ENCODE measurements at regions of chr2 and their contacts with region 1.

Region 1: DNA sequence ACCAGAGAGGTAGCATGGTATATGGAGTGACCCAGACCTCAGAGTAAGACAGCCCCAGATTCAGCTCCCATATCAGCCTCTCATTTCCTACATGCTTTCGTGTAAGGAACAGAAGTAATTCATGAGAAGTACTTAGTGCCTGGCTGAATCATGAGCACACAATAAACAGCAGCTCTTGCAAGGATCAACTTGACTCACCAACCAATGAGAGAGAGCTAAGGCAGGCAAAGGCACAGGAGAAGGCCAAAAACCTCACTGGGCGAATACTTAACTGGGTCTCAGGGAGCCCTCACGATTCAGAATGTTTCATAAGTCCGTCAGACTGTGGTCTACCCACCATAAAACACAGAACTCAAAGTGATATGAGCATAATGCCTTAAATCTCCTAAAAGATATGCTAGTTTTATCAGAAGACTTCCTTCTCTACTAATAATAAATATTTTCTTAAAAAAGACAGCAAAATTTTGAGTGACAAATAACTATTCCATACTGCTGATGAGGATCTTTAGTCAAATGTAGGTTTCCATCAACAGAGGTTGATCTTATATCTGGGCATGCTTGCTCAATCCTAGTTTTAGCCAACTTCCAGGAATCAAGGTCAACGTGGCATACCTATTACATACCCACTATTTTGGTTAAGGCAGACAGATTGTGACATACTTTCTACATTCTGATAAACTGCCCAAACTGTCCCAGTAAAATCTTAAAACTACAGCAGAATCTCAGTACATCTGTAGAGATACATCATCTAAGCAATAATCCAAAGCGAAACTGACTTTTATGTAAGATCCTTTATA is 34.9 kb downstream of the IMMT start:
- DNase-seq: no peak
- ATAC-seq: no peak
- H3K4me3 ChIP-seq: no peak overlapping the region
- H3K4me3 Mint-ChIP-seq: no peak overlapping the region
- H3K27ac ChIP-seq: no peak overlapping the region
- H3K27ac Mint-ChIP-seq: no peak overlapping the region
- H3K4me1 ChIP-seq: no peaks in the 10 kb centered on the region
- H3K4me1 Mint-ChIP-seq: no peaks in the 10 kb centered on the region
- H3K27me3 ChIP-seq: no peaks in the 10 kb centered on the region
- H3K27me3 Mint-ChIP-seq: no peaks in the 10 kb centered on the region
- CTCF ChIP-seq: no peak

Region 2: GRCh38 chr2:86118133-86118532 is 42.2 kb before region 1 on chr2:
- CTCF ChIA-PET with region 1: no interaction called
- POLR2A ChIA-PET with region 1: interaction called, 3 read pairs
- intact Hi-C with region 1: loop called in 1 of 2 experiments (anchors 1 kb)
- DNase-seq: no peak
- ATAC-seq: no peak
- H3K4me3 ChIP-seq: no peak overlapping the region
- H3K4me3 Mint-ChIP-seq: no peak overlapping the region
- H3K27ac ChIP-seq: no peak overlapping the region
- H3K27ac Mint-ChIP-seq: no peak overlapping the region
- H3K4me1 ChIP-seq: no peaks in the 10 kb centered on the region
- H3K4me1 Mint-ChIP-seq: peaks cover 8% of the 10 kb centered on the region
- H3K27me3 ChIP-seq: no peaks in the 10 kb centered on the region
- H3K27me3 Mint-ChIP-seq: no peaks in the 10 kb centered on the region
- CTCF ChIP-seq: no peak

Region 3: GRCh38 chr2:86124683-86125082 is 35.7 kb before region 1 on chr2:
- CTCF ChIA-PET with region 1: no interaction called
- POLR2A ChIA-PET with region 1: no interaction called
- intact Hi-C with region 1: loop called in 1 of 2 experiments (anchors 5 kb)
- DNase-seq: no peak
- ATAC-seq: no peak
- H3K4me3 ChIP-seq: no peak overlapping the region
- H3K4me3 Mint-ChIP-seq: no peak overlapping the region
- H3K27ac ChIP-seq: no peak overlapping the region
- H3K27ac Mint-ChIP-seq: no peak overlapping the region
- H3K4me1 ChIP-seq: no peaks in the 10 kb centered on the region
- H3K4me1 Mint-ChIP-seq: no peaks in the 10 kb centered on the region
- H3K27me3 ChIP-seq: no peaks in the 10 kb centered on the region
- H3K27me3 Mint-ChIP-seq: no peaks in the 10 kb centered on the region
- CTCF ChIP-seq: no peak

Region 4: GRCh38 chr2:86216577-86217555 is 56.5 kb after region 1 on chr2:
- CTCF ChIA-PET with region 1: no interaction called
- POLR2A ChIA-PET with region 1: no interaction called
- intact Hi-C with region 1: no loop called
- DNase-seq: no peak
- ATAC-seq: no peak
- H3K4me3 ChIP-seq: no peak overlapping the region
- H3K4me3 Mint-ChIP-seq: peak overlapping the region; percentile 58
- H3K27ac ChIP-seq: no peak overlapping the region
- H3K27ac Mint-ChIP-seq: no peak overlapping the region
- H3K4me1 ChIP-seq: peaks cover 6% of the 10 kb centered on the region
- H3K4me1 Mint-ChIP-seq: peaks cover 22% of the 10 kb centered on the region
- H3K27me3 ChIP-seq: no peaks in the 10 kb centered on the region
- H3K27me3 Mint-ChIP-seq: no peaks in the 10 kb centered on the region
- CTCF ChIP-seq: no peak